ENCODE measurements at regions of chr16 and their contacts with region 1.

Region 1: DNA sequence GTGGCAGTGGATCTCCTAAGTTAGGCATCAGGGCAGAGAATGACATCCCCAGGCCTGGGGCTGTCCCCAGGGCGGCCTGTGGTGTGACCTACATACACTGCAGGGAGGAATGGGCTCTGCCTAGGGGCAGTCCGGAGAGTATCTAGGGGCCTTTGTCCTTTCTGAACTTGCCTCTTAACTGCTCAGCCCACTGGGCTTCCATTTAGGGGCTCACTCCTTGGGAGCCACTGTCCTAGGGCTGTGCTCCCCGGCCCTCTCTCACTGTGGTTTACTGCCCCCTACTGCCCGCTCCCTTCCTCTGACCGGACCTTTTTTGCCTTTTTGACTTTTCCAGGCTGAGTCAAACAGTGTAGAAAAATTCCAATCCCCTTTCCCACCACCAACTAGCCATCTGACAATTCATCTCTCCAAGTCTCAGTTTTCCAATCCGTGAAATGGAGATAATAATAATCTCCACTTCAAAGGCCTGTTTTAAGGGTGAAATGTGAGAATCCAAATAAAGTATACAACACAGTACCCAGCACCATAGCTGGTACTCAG is 66.8 kb downstream of the DNAH3 start:
- DNase-seq: peak; percentile 60
- H3K4me3 ChIP-seq: no peak overlapping the region; a peak in 1 of 4 replicates
- H3K27ac ChIP-seq: no peak overlapping the region
- H3K4me1 ChIP-seq: no peaks in the 10 kb centered on the region
- H3K27me3 ChIP-seq: no peaks in the 10 kb centered on the region
- CTCF ChIP-seq: peak; percentile 75
- EP300 ChIP-seq: no peak
- RAD21 ChIP-seq: peak; percentile 82

Region 2: DNA sequence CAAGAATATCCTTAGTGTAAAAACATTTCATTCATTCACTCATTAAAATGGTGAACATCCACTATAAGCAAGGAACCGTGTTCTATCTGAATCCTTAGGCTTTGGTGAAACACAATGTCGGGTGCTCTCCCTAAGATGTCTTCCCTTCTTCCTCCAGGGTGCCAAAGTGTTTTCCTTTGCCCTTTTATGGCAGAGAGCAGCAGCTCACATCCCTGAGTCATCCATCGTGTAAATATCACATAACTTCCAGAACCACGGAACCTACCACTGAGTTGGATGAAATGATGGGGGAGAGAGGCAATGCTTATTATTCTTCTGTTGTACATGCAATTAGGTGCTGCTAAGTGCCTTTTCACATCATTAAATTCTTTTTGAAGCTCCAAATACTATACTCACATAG is 16.6 kb after region 1 on chr16:
- CTCF ChIA-PET with region 1: interaction called, 12 read pairs
- POLR2A ChIA-PET with region 1: no interaction called
- DNase-seq: no peak
- H3K4me3 ChIP-seq: no peak overlapping the region
- H3K27ac ChIP-seq: no peak overlapping the region
- H3K4me1 ChIP-seq: peaks cover 3 to 11% of the 10 kb centered on the region in 2 experiments; a peak in 2 of 4 replicates
- H3K27me3 ChIP-seq: no peaks in the 10 kb centered on the region
- CTCF ChIP-seq: no peak
- EP300 ChIP-seq: no peak
- RAD21 ChIP-seq: no peak

Region 3: GRCh38 chr16:21126518-21126917 is 42.7 kb after region 1 on chr16:
- CTCF ChIA-PET with region 1: no interaction called
- POLR2A ChIA-PET with region 1: no interaction called
- DNase-seq: no peak
- H3K4me3 ChIP-seq: no peak overlapping the region
- H3K27ac ChIP-seq: no peak overlapping the region
- H3K4me1 ChIP-seq: no peaks in the 10 kb centered on the region
- H3K27me3 ChIP-seq: peaks cover 7% of the 10 kb centered on the region; the same call in 1 of the 2 replicates
- CTCF ChIP-seq: no peak
- EP300 ChIP-seq: no peak
- RAD21 ChIP-seq: no peak

Region 4: DNA sequence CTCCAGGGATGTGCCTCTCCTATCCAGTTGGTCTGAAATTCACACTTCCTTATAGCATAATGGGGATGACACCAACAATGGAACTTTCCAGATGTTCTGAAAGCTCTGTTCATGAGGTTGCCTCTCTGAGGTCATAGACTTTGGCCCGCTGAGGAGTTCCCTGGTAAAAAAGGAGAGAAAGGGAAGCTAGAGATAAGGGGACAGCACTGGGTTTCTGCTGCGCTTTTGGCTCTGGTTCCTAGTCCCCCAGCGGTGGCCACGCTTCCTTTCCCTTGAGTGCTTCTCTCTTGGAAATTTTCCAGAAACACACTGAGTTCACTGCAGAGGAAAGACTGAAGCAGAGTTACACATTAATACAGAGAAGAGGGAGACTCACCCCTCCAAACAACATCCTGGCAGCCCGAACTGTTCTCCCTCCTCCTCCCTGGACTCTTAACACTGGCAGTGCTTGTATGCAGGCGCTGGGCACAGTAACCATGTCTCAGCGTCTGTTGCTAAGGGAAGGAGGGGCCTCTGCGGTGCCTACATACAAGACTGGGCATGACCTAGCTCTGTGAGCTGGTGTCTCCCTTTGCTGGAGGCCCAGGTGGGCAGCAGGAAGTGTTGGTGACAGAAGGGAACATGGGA is 66.7 kb after region 1 on chr16 and contains the start of gene DNAH3:
- CTCF ChIA-PET with region 1: no interaction called
- POLR2A ChIA-PET with region 1: no interaction called
- DNase-seq: peak; percentile 41
- H3K4me3 ChIP-seq: no peak within 1 kb of the TSS
- H3K27ac ChIP-seq: no peak within 1 kb of the TSS
- H3K4me1 ChIP-seq: peaks cover 0 to 6% of the 10 kb centered on the region in 2 experiments; a peak in 1 of 4 replicates
- H3K27me3 ChIP-seq: peaks cover 13% of the 10 kb centered on the region
- CTCF ChIP-seq: no peak
- EP300 ChIP-seq: no peak
- RAD21 ChIP-seq: no peak
- polyA plus RNA-seq, gene DNAH3: not detected in 2 replicates